Activated T-helper 1 cell treated with anti-CD3 and anti-CD28 coated beads, Interleukin-12 subunit alpha, Interleukin-12 subunit beta, Interleukin-2, Interleukin-4 antibody, amounts not matched to agents 30 ng/mL and 10 ng/mL and 1 ng/mL, durations not matched to agents 14 hours and 24 hours and 36 hours (primary cell): ENCODE measurements at regions of chr10 and their contacts with region 1.

Region 1: GRCh38 chr10:33155720-33156638 is 178.5 kb downstream of the NRP1 start:
- DNase-seq: no peak
- H3K4me3 Mint-ChIP-seq: peak overlapping the region; percentile 31
- H3K27ac Mint-ChIP-seq: peak overlapping the region; percentile 41
- H3K4me1 Mint-ChIP-seq: peaks cover 38% of the 10 kb centered on the region
- H3K27me3 Mint-ChIP-seq: peaks cover 2% of the 10 kb centered on the region

Region 2: DNA sequence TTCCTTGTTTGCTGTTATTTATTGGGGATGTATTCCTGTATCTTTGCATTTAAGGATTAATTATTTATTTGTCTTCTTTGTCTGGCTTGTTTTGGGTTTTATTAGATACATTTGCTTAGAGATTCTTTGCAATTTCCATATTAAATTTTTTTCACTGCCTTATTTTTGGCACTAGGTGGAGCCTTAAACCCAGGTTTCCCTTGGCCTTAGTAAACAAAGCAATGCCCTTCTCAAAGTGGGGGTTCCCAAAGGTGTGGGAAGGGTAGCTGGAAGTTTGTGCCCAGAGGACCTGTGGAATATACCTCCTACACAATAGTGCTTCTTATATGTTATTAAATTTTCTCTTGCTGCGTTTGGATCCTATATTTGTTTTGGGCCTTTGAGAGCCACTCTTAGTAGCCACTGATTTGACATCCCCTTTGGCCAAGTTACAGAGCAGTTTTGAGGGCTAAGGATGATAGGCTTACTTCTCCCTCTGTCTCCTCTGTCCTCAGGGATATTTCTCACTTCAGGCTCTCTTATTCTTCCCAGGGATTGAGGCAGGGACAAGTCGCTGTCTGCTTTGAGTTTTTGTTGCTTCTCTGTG is 360.3 kb before region 1 on chr10:
- intact Hi-C with region 1: loop called (anchors 1 kb)
- DNase-seq: no peak
- H3K4me3 Mint-ChIP-seq: no peak overlapping the region
- H3K27ac Mint-ChIP-seq: no peak overlapping the region
- H3K4me1 Mint-ChIP-seq: no peaks in the 10 kb centered on the region
- H3K27me3 Mint-ChIP-seq: peaks cover 2% of the 10 kb centered on the region

Region 3: GRCh38 chr10:33098951-33099663 is 56.9 kb before region 1 on chr10:
- intact Hi-C with region 1: loop called (anchors 2 kb)
- DNase-seq: no peak
- H3K4me3 Mint-ChIP-seq: no peak overlapping the region
- H3K27ac Mint-ChIP-seq: peak overlapping the region; percentile 73
- H3K4me1 Mint-ChIP-seq: peaks cover 30% of the 10 kb centered on the region
- H3K27me3 Mint-ChIP-seq: peaks cover 2% of the 10 kb centered on the region

Region 4: GRCh38 chr10:33120700-33121099 is 35.3 kb before region 1 on chr10:
- intact Hi-C with region 1: loop called (anchors 1 kb)
- DNase-seq: no peak
- H3K4me3 Mint-ChIP-seq: peak overlapping the region; percentile 2
- H3K27ac Mint-ChIP-seq: peak overlapping the region; percentile 57
- H3K4me1 Mint-ChIP-seq: peaks cover 45% of the 10 kb centered on the region
- H3K27me3 Mint-ChIP-seq: no peaks in the 10 kb centered on the region

Region 5: DNA sequence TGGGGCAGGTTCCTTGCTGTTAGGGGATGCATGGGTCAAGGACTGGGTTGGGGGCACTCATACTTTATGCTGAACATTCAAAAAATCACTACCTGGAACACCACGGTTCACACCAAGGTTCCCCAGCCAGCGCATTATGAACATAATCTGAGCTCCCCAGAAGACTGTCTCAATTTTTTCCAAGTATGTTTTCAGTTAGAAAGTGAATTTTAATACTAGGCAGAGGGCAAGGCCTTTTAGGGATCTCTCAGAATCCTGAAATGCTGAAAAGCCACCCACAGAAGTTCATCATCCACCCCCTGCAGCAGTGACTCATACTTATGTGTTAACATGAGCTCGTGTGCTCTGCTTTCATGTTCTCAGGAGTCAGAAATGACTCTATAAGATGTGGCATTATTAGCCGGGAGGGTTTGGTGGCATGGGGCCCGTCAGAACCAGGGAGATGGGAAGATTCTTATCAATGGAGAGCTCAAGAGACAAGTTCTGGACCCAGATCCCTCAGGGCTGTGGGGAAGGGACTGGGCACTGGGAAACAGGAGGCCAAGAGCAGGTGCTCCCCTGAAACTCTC is 12.7 kb before region 1 on chr10:
- intact Hi-C with region 1: loop called (anchors 1 kb)
- DNase-seq: peak; percentile 31
- H3K4me3 Mint-ChIP-seq: no peak overlapping the region
- H3K27ac Mint-ChIP-seq: peak overlapping the region; percentile 70
- H3K4me1 Mint-ChIP-seq: peaks cover 49% of the 10 kb centered on the region
- H3K27me3 Mint-ChIP-seq: no peaks in the 10 kb centered on the region